ENCODE measurements at regions of chr17 and their contacts with region 1.

Region 1: GRCh38 chr17:64281962-64282727 is 19.1 kb upstream of the TEX2 start:
- DNase-seq: peak; percentile 80
- H3K4me3 ChIP-seq: no peak overlapping the region
- H3K27ac ChIP-seq: no peak overlapping the region
- H3K4me1 ChIP-seq: peaks cover 0 to 3% of the 10 kb centered on the region in 2 experiments; a peak in 1 of 4 replicates
- H3K27me3 ChIP-seq: no peaks in the 10 kb centered on the region
- CTCF ChIP-seq: peak; percentile 99
- EP300 ChIP-seq: no peak
- RAD21 ChIP-seq: peak; percentile 100

Region 2: GRCh38 chr17:64158831-64159590 is 123.1 kb before region 1 on chr17:
- CTCF ChIA-PET with region 1: interaction called, 11 read pairs
- POLR2A ChIA-PET with region 1: no interaction called
- DNase-seq: no peak
- H3K4me3 ChIP-seq: no peak overlapping the region
- H3K27ac ChIP-seq: peak overlapping the region in 1 of 2 experiments; percentile 12; a peak in 1 of 4 replicates
- H3K4me1 ChIP-seq: peaks cover 0 to 49% of the 10 kb centered on the region in 2 experiments; a peak in 2 of 4 replicates
- H3K27me3 ChIP-seq: no peaks in the 10 kb centered on the region
- CTCF ChIP-seq: no peak
- EP300 ChIP-seq: no peak
- RAD21 ChIP-seq: no peak

Region 3: GRCh38 chr17:64240741-64241347 is 41.3 kb before region 1 on chr17:
- CTCF ChIA-PET with region 1: interaction called, 12 read pairs
- POLR2A ChIA-PET with region 1: no interaction called
- DNase-seq: peak; percentile 87
- H3K4me3 ChIP-seq: peak overlapping the region; percentile 1 to 45; a peak in 3 of 4 replicates
- H3K27ac ChIP-seq: peak overlapping the region; percentile 79 to 97
- H3K4me1 ChIP-seq: peaks cover 36 to 44% of the 10 kb centered on the region in 2 experiments
- H3K27me3 ChIP-seq: no peaks in the 10 kb centered on the region
- CTCF ChIP-seq: no peak
- EP300 ChIP-seq: peak; percentile 51 to 91; a peak in 3 of 4 replicates
- RAD21 ChIP-seq: peak; percentile 46

Region 4: GRCh38 chr17:64262417-64263260 is 19.5 kb before region 1 on chr17 and contains the start of gene TEX2:
- CTCF ChIA-PET with region 1: interaction called, 18 read pairs
- POLR2A ChIA-PET with region 1: no interaction called
- DNase-seq: peak; percentile 86
- H3K4me3 ChIP-seq: peak within 1 kb of the TSS; percentile 84 to 91
- H3K27ac ChIP-seq: peak within 1 kb of the TSS; percentile 64 to 86
- H3K4me1 ChIP-seq: peaks cover 23 to 32% of the 10 kb centered on the region in 2 experiments; a peak in 3 of 4 replicates
- H3K27me3 ChIP-seq: no peaks in the 10 kb centered on the region
- CTCF ChIP-seq: no peak
- EP300 ChIP-seq: no peak
- RAD21 ChIP-seq: 0 out of 2 replicates have a peak, but pooled peaks have one; percentile 3
- polyA plus RNA-seq, gene TEX2: 24.0 and 30.7 TPM in 2 replicates

Region 5: GRCh38 chr17:64297467-64298098 is 15.4 kb after region 1 on chr17:
- CTCF ChIA-PET with region 1: interaction called, 11 read pairs
- POLR2A ChIA-PET with region 1: no interaction called
- DNase-seq: no peak
- H3K4me3 ChIP-seq: no peak overlapping the region
- H3K27ac ChIP-seq: no peak overlapping the region
- H3K4me1 ChIP-seq: no peaks in the 10 kb centered on the region
- H3K27me3 ChIP-seq: no peaks in the 10 kb centered on the region; the same call in 1 of the 2 replicates
- CTCF ChIP-seq: no peak
- EP300 ChIP-seq: no peak
- RAD21 ChIP-seq: no peak

Region 6: DNA sequence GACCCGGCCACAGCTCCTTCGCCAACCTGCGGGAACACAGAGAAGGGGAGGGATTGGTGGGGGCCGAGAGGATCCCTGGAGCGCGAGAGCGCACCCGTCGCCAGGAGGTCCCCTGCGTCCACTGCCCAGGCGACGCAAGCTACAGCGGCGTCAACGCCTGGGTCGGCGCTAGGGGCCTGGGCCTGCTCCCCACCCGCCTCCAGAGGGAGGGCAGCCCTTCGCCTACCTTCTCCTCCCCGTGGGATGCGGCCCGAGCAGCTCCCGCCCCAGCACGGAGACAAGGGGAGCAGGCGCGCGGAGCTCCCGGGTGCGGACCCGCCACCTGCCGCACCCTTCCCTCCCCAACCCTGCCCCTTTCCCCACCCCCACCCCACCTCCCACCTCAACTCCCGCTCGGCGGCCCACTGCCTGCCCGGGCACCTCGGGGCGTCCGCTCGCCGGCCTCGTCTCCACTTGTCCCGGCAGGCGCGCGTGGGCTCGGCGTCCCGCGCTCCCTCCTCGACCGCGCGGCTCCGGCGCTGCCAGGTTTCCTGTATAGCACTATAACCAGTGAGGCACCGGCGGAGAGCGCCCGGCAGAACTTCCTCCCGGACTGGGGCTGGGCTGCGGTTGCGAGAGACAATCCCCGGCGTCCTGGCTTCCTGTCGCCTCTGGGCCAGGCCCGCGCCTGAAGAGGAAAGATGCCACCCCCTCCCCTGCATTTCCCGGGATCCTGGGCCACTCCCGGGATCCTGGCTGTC is 499.0 kb after region 1 on chr17:
- CTCF ChIA-PET with region 1: no interaction called
- POLR2A ChIA-PET with region 1: no interaction called
- DNase-seq: peak; percentile 64
- H3K4me3 ChIP-seq: peak overlapping the region in 1 of 2 experiments; percentile 19; a peak in 1 of 4 replicates
- H3K27ac ChIP-seq: no peak overlapping the region
- H3K4me1 ChIP-seq: peaks cover 6 to 18% of the 10 kb centered on the region in 2 experiments; a peak in 3 of 4 replicates
- H3K27me3 ChIP-seq: no peaks in the 10 kb centered on the region
- CTCF ChIP-seq: no peak
- EP300 ChIP-seq: no peak
- RAD21 ChIP-seq: no peak